MCF 10A (cell line): ENCODE measurements at regions of chr11 and their contacts with region 1.

Region 1: GRCh38 chr11:123707606-123708205 is 33.8 kb downstream of the ZNF202 start:
- DNase-seq: peak; percentile 78
- H3K4me3 Mint-ChIP-seq: no peak overlapping the region
- H3K27ac Mint-ChIP-seq: no peak overlapping the region
- H3K4me1 Mint-ChIP-seq: no peaks in the 10 kb centered on the region
- H3K27me3 Mint-ChIP-seq: peaks cover 15% of the 10 kb centered on the region
- CTCF ChIP-seq: peak; percentile 84

Region 2: DNA sequence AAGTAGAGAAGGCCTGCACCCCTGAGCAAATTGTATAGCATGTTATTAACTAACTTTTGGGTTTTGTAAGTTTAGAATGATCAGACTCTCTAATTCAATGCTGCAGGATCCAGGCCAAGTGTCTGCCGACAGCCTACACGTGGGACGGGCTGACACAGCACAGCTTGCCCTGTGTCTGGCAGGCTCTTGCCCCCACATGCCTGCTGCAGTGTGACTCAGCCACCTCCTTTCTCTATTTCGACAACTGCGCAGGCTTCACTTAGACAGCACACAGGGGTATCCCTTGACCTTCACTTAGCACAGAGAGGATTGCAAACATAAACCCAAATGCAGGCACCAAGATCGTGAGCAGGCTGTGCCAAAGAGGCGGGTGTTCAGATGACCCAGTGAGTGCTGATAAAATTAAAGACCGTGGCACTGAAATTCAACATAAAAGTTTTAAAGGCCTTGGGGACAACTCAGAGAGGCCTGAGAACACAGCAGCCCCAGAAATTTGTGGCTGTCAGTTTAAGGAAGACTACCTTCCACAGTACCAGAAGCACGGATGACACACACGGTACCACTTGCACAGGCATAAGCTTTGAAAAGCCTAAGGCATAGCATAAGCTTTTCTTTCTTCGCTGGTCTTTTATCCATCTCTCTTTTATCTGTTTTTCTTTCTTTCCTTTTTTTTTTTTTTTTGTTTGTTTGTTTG is 91.1 kb before region 1 on chr11:
- CTCF ChIA-PET with region 1: interaction called, 13 read pairs
- POLR2A ChIA-PET with region 1: interaction called, 4 read pairs
- intact Hi-C with region 1: no loop called
- DNase-seq: peak; percentile 77
- H3K4me3 Mint-ChIP-seq: no peak overlapping the region
- H3K27ac Mint-ChIP-seq: peak overlapping the region; percentile 76
- H3K4me1 Mint-ChIP-seq: peaks cover 9% of the 10 kb centered on the region
- H3K27me3 Mint-ChIP-seq: peaks cover 27% of the 10 kb centered on the region
- CTCF ChIP-seq: no peak

Region 3: GRCh38 chr11:123674297-123674696 is 33.4 kb before region 1 on chr11:
- CTCF ChIA-PET with region 1: interaction called, 19 read pairs
- POLR2A ChIA-PET with region 1: no interaction called
- intact Hi-C with region 1: no loop called
- DNase-seq: no peak
- H3K4me3 Mint-ChIP-seq: no peak overlapping the region
- H3K27ac Mint-ChIP-seq: no peak overlapping the region
- H3K4me1 Mint-ChIP-seq: peaks cover 11% of the 10 kb centered on the region
- H3K27me3 Mint-ChIP-seq: no peaks in the 10 kb centered on the region
- CTCF ChIP-seq: no peak

Region 4: DNA sequence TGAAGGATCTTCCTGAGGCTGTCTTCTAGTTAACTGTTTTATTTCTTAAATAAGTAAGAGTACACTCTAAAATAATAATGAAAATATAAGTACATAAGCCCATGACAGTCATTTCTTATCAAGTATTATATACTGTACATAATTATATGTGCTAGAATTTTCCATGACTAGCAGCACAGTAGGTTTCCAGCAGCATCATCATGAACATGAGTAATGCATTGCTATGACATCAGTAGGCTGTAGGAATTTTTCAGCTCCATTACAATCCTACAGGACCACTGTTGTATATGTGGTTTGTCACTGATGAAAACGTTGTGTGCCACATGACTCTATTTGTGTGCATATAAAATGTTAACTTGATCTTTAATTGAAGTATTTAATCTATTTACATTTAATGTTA is 11.7 kb after region 1 on chr11:
- CTCF ChIA-PET with region 1: interaction called, 15 read pairs
- POLR2A ChIA-PET with region 1: interaction called, 3 read pairs
- intact Hi-C with region 1: no loop called
- DNase-seq: no peak
- H3K4me3 Mint-ChIP-seq: no peak overlapping the region
- H3K27ac Mint-ChIP-seq: no peak overlapping the region
- H3K4me1 Mint-ChIP-seq: peaks cover 9% of the 10 kb centered on the region
- H3K27me3 Mint-ChIP-seq: peaks cover 28% of the 10 kb centered on the region
- CTCF ChIP-seq: no peak

Region 5: DNA sequence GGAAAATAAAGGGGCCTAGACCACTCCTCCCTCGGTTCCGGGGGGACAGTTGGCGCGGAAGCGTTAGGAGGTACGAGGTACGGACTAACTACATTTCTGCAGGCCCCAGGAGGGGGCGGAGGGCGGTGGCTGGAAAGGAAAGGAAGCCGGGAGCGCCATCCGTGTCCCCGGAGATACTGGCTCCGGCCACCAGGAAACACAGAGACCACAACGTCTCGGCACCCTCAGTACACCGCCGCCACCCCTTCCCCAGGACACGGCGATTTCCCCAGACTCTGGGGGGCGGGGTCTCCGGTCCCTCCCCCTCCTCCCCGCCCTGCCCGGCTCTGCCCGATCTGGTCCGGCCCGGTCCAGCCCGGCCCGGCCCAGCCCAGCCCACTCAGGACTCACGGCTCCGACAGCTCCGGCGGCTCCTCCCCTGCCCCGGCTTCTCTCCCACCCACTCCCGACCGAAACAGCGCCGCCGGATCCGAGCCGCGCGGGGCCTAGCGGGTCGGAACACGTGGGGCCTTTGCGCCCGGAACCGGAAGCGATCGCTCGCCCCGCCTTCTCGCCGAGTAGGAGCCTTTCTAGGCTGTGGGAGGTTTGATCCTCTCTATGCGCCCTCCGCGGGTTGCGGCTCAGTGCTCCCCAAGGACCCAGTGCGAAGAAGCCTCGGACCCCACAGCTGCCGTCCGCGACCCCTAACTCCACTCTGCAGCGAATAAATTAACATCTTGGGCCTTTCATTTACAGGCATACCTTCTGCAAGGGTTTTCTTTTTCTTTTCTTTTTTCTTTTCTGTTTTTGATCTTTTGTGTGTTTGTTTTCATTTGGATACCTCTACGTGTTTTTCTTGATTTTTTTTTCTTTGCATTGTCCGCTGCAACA is 33.7 kb after region 1 on chr11 and contains the start of gene ZNF202:
- CTCF ChIA-PET with region 1: interaction called, 14 read pairs
- POLR2A ChIA-PET with region 1: no interaction called
- intact Hi-C with region 1: no loop called
- DNase-seq: peak; percentile 91
- H3K4me3 Mint-ChIP-seq: peak within 1 kb of the TSS; percentile 89
- H3K27ac Mint-ChIP-seq: peak within 1 kb of the TSS; percentile 87
- H3K4me1 Mint-ChIP-seq: peaks cover 13% of the 10 kb centered on the region
- H3K27me3 Mint-ChIP-seq: no peaks in the 10 kb centered on the region
- CTCF ChIP-seq: no peak
- total RNA-seq, gene ZNF202: 15.6 and 22.1 TPM in 2 replicates

Region 6: GRCh38 chr11:123770712-123771111 is 63.0 kb after region 1 on chr11:
- CTCF ChIA-PET with region 1: no interaction called
- POLR2A ChIA-PET with region 1: no interaction called
- intact Hi-C with region 1: no loop called
- DNase-seq: no peak
- H3K4me3 Mint-ChIP-seq: no peak overlapping the region
- H3K27ac Mint-ChIP-seq: no peak overlapping the region
- H3K4me1 Mint-ChIP-seq: peaks cover 7% of the 10 kb centered on the region
- H3K27me3 Mint-ChIP-seq: no peaks in the 10 kb centered on the region
- CTCF ChIP-seq: no peak